Heart left ventricle (tissue), 16 donors: ENCODE measurements at regions of chr1 and their contacts with region 1.

Region 1: DNA sequence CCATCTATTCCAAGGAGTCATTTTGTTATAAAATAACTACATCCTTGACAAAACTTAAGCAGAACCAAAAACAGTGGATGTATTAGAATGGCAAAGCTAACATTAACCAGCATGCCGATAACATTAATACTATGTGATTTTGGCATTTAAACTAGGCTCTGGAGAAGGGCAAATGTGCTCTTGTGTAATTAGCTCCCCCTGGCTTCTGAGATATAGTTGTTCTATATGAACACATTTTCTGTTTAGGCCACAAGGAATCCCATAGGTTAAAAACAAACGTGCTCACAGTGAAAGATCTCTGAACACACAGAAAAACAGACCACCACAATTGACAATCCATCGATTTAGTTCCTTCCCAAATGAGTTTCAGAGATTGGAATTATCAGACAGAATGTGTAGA is 57.4 kb upstream of the TARS2 start:
- DNase-seq: no peak
- ATAC-seq: no peak
- H3K4me3 ChIP-seq: no peak overlapping the region
- H3K27ac ChIP-seq: no peak overlapping the region
- H3K4me1 ChIP-seq: no peaks in the 10 kb centered on the region
- H3K27me3 ChIP-seq: no peaks in the 10 kb centered on the region
- CTCF ChIP-seq: peak in 4 of 12 donors; percentile 6 to 30 (median 11)
- POLR2A ChIP-seq: no peak

Region 2: GRCh38 chr1:150259758-150260669 is 169.8 kb before region 1 on chr1:
- intact Hi-C with region 1: loop called in 1 of 10 experiments (anchors 10 kb)
- DNase-seq: peak in 3 of 5 donors; percentile 32 to 68 (median 43)
- ATAC-seq: peak; percentile 35 to 74 (median 54)
- H3K4me3 ChIP-seq: peak overlapping the region in 2 of 12 donors; percentile 15 to 16
- H3K27ac ChIP-seq: peak overlapping the region in 7 of 12 donors; percentile 2 to 77 (median 46)
- H3K4me1 ChIP-seq: peaks cover 0 to 38% (median 20%) of the 10 kb centered on the region in 12 donors
- H3K27me3 ChIP-seq: peaks cover 0 to 22% (median 0%) of the 10 kb centered on the region in 9 donors
- CTCF ChIP-seq: no peak
- POLR2A ChIP-seq: no peak

Region 3: GRCh38 chr1:150363426-150364230 is 66.2 kb before region 1 on chr1 and contains the start of gene RPRD2:
- intact Hi-C with region 1: loop called in 1 of 10 experiments (anchors 10 kb)
- DNase-seq: peak; percentile 99 to 100 (median 100)
- ATAC-seq: peak; percentile 98 to 99 (median 99)
- H3K4me3 ChIP-seq: peak within 1 kb of the TSS; percentile 27 to 91 (median 72)
- H3K27ac ChIP-seq: peak within 1 kb of the TSS; percentile 92 to 99 (median 98)
- H3K4me1 ChIP-seq: peaks cover 0 to 28% (median 14%) of the 10 kb centered on the region in 12 donors
- H3K27me3 ChIP-seq: no peaks in the 10 kb centered on the region
- CTCF ChIP-seq: peak in 1 of 12 donors; percentile 11
- POLR2A ChIP-seq: peak in 1 of 2 donors; percentile 62
- total RNA-seq, gene RPRD2: 19.4 to 33.4 (median 25.3) TPM

Region 4: DNA sequence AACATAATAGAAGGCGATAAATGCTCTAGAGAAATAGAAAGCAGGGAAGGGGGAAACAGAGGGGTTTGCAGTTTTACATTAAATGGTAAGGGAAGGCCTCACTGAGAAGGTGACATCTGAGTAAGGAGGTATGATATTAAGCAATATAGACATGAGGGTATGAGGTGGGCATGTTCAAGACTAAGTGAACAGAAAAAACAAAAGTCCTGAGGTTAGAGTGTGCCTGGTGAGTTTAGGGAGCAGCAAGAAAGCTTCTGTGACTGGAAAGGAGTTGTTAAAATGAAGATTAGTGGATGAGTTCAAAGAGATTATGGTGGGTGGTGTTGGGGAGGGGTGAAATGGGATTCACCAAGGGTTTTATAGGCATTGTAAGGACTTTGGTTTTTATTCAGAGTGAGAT is 57.2 kb before region 1 on chr1:
- intact Hi-C with region 1: loop called in 2 of 10 experiments (anchors 10 kb)
- DNase-seq: no peak
- ATAC-seq: no peak
- H3K4me3 ChIP-seq: no peak overlapping the region
- H3K27ac ChIP-seq: no peak overlapping the region
- H3K4me1 ChIP-seq: peaks cover 0 to 60% (median 31%) of the 10 kb centered on the region in 12 donors
- H3K27me3 ChIP-seq: no peaks in the 10 kb centered on the region
- CTCF ChIP-seq: no peak
- POLR2A ChIP-seq: no peak

Region 5: GRCh38 chr1:150397402-150398032 is 32.3 kb before region 1 on chr1:
- intact Hi-C with region 1: loop called in 1 of 10 experiments (anchors 5 kb)
- DNase-seq: no peak
- ATAC-seq: no peak
- H3K4me3 ChIP-seq: no peak overlapping the region
- H3K27ac ChIP-seq: no peak overlapping the region
- H3K4me1 ChIP-seq: peaks cover 0 to 3% (median 0%) of the 10 kb centered on the region in 12 donors
- H3K27me3 ChIP-seq: no peaks in the 10 kb centered on the region
- CTCF ChIP-seq: no peak
- POLR2A ChIP-seq: no peak